Activated CD4-positive, alpha-beta memory T cell treated with anti-CD3 and anti-CD28 coated beads, Interleukin-2, amount 10 ng/mL, durations not matched to agents 7 days and 5 days (primary cell): ENCODE measurements at regions of chr17 and their contacts with region 1.

Region 1: GRCh38 chr17:50397111-50397918 is at the start of gene LRRC59:
- DNase-seq: peak; percentile 93
- H3K4me3 Mint-ChIP-seq: peak within 1 kb of the TSS; percentile 82
- H3K27ac Mint-ChIP-seq: peak within 1 kb of the TSS; percentile 88
- H3K4me1 Mint-ChIP-seq: peaks cover 30% of the 10 kb centered on the region
- H3K27me3 Mint-ChIP-seq: no peaks in the 10 kb centered on the region
- total RNA-seq, gene LRRC59: 67.1 to 68.9 TPM

Region 2: GRCh38 chr17:50345432-50346312 is 51.6 kb before region 1 on chr17 and contains the start of gene XYLT2:
- CTCF ChIA-PET with region 1: interaction called, 12 read pairs
- POLR2A ChIA-PET with region 1: interaction called, 56 read pairs
- DNase-seq: peak; percentile 93
- H3K4me3 Mint-ChIP-seq: peak within 1 kb of the TSS; percentile 89
- H3K27ac Mint-ChIP-seq: peak within 1 kb of the TSS; percentile 90
- H3K4me1 Mint-ChIP-seq: peaks cover 39% of the 10 kb centered on the region
- H3K27me3 Mint-ChIP-seq: no peaks in the 10 kb centered on the region
- total RNA-seq, gene XYLT2: 26.7 to 29.7 TPM

Region 3: DNA sequence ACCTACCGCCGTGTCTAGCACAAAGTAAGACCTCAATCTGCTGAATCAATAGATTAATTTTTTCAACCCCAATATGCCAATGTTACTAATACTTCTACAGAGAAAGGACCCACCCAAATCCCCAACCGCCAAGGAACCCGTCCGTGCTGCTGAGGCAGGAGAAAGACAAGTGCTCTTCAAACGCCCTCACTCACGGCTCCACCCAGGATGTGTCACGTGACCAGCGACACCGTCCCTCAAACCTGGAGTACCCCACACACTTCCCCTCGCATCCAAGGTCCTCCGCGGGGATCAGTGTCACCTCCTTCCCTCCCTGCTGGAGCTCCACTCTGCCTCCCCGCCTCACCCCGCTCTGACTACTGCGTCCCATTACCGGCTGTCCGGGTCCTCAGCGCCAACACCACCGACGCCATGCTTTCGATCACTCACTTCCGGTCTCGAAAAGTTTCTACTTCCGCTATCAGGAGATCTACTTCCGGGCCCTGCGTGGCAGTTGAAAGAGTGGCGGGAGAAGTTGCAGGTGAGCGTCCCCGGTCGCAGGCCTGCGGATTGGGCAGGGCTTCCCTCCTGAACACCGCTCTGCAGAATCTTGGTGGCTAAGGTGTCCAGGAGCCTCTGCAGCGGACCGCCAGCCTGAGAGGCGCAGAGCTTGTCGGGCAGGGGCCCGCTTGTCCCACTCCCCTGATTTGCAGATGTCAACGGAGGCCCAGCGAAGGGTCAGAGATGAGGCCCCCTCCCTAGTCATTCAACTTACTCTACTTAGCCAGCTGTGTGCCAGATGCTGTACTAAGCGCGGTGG is 24.4 kb before region 1 on chr17 and contains the starts of genes EME1 and MRPL27:
- CTCF ChIA-PET with region 1: interaction called, 40 read pairs
- POLR2A ChIA-PET with region 1: interaction called, 142 read pairs
- DNase-seq: peak; percentile 89
- H3K4me3 Mint-ChIP-seq: peak within 1 kb of the TSS; percentile 97
- H3K27ac Mint-ChIP-seq: peak within 1 kb of the TSS; percentile 97
- H3K4me1 Mint-ChIP-seq: peaks cover 39% of the 10 kb centered on the region
- H3K27me3 Mint-ChIP-seq: no peaks in the 10 kb centered on the region
- total RNA-seq, gene EME1: 25.1 to 26.1 TPM
- total RNA-seq, gene MRPL27: 56.5 to 57.5 TPM

Region 4: DNA sequence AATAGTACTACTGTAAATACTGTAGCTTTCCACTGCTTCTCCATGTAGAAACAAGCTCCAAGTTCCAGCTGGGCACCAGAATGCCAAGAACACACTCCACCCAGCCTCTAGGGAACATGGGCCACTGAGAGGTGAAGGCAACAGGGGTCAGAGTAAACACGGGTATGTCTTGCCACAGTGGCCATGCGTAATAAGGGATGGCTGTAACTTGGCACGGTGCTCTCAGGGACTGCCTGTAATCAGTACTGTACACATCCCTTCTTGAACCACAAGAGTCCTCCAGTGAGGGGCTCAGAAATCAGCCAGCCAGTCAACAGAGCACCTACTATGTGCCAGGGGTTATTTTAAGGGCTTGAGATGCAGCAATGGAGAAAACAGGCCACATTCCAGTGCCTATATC is 10.8 kb before region 1 on chr17:
- CTCF ChIA-PET with region 1: interaction called, 37 read pairs
- POLR2A ChIA-PET with region 1: interaction called, 44 read pairs
- DNase-seq: no peak
- H3K4me3 Mint-ChIP-seq: no peak overlapping the region
- H3K27ac Mint-ChIP-seq: no peak overlapping the region
- H3K4me1 Mint-ChIP-seq: no peaks in the 10 kb centered on the region
- H3K27me3 Mint-ChIP-seq: no peaks in the 10 kb centered on the region

Region 5: DNA sequence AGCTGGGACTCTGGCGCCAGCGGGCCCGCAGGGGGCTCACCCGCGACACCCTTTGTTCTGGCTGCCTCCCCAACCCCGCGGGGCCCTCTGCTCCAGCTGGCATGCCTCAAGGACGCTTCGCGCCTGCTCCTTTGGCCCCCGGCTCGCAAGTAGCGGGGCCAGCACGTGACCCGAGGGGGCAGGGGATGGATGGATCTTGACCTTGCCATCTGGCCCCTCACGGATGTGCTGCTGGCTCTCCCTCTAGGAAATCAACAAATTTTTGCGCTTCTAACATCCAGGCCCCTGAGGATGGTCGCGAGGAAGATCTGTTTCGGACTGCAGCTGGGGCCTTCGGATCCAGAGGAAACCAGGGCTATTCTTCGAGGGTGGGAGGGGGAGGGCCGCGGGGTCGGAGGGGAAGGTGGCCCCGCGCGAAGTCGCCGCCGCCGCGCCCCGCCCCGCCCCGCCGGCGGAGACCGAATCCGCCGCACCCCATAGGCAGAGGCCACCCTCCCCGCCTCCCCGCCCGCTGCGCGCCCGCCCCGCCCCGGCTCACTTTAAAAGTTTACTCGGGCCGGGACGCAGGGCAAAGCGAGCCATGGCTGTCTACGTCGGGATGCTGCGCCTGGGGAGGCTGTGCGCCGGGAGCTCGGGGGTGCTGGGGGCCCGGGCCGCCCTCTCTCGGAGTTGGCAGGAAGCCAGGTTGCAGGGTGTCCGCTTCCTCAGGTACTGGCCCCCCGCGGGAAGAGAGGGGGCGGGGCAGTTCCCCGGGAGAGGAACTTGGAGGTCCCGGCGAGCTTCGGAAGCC is 28.6 kb after region 1 on chr17 and contains the start of gene ACSF2:
- CTCF ChIA-PET with region 1: interaction called, 42 read pairs
- POLR2A ChIA-PET with region 1: interaction called, 28 read pairs
- DNase-seq: peak; percentile 82
- H3K4me3 Mint-ChIP-seq: peak within 1 kb of the TSS; percentile 84
- H3K27ac Mint-ChIP-seq: peak within 1 kb of the TSS; percentile 75
- H3K4me1 Mint-ChIP-seq: peaks cover 33% of the 10 kb centered on the region
- H3K27me3 Mint-ChIP-seq: no peaks in the 10 kb centered on the region
- total RNA-seq, gene ACSF2: 28.7 to 30.7 TPM

Region 6: GRCh38 chr17:50478391-50479381 is 81.4 kb after region 1 on chr17 and contains the start of gene RSAD1:
- CTCF ChIA-PET with region 1: interaction called, 20 read pairs
- POLR2A ChIA-PET with region 1: interaction called, 10 read pairs
- DNase-seq: peak; percentile 90
- H3K4me3 Mint-ChIP-seq: peak within 1 kb of the TSS; percentile 82
- H3K27ac Mint-ChIP-seq: peak within 1 kb of the TSS; percentile 68
- H3K4me1 Mint-ChIP-seq: peaks cover 25% of the 10 kb centered on the region
- H3K27me3 Mint-ChIP-seq: peaks cover 3% of the 10 kb centered on the region
- total RNA-seq, gene RSAD1: 24.5 to 28.4 TPM

Region 7: GRCh38 chr17:50541716-50542688 is 144.7 kb after region 1 on chr17:
- CTCF ChIA-PET with region 1: no interaction called
- POLR2A ChIA-PET with region 1: no interaction called
- DNase-seq: peak; percentile 87
- H3K4me3 Mint-ChIP-seq: peak overlapping the region; percentile 65
- H3K27ac Mint-ChIP-seq: no peak overlapping the region
- H3K4me1 Mint-ChIP-seq: peaks cover 22% of the 10 kb centered on the region
- H3K27me3 Mint-ChIP-seq: peaks cover 19% of the 10 kb centered on the region

Region 8: DNA sequence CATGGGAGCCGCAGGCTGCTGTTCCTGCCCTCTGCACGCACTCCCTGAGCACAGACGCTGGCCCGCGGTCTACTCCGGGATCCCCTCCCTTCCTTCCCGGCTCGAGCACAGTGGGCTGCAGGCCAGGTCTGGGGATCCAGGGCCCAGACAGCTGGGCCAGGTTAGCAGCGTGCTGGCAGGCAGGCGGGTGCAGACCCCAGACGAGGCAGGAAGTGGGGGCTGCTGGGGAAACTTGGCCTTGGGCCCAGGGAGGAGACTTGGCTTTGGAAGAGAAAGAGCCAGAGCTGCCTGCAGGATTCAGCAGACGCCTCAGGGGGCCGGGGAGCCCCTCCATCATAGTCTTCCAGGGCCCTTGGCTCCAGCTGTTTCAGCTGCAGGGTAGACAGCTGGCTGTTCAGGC is 207.2 kb after region 1 on chr17:
- CTCF ChIA-PET with region 1: no interaction called
- POLR2A ChIA-PET with region 1: no interaction called
- DNase-seq: no peak
- H3K4me3 Mint-ChIP-seq: no peak overlapping the region
- H3K27ac Mint-ChIP-seq: no peak overlapping the region
- H3K4me1 Mint-ChIP-seq: no peaks in the 10 kb centered on the region
- H3K27me3 Mint-ChIP-seq: peaks cover 22% of the 10 kb centered on the region